Psoas muscle (tissue), 8 donors: ENCODE measurements at regions of chr7 and their contacts with region 1.

Region 1: GRCh38 chr7:50418086-50418515 is 32.0 kb downstream of the FIGNL1 start:
- DNase-seq: peak; percentile 50 to 68
- ATAC-seq: peak; percentile 66 to 86 (median 79)
- H3K4me3 ChIP-seq: no peak overlapping the region
- H3K27ac ChIP-seq: no peak overlapping the region
- H3K4me1 ChIP-seq: no peaks in the 10 kb centered on the region
- H3K27me3 ChIP-seq: no peaks in the 10 kb centered on the region
- CTCF ChIP-seq: peak; percentile 66

Region 2: DNA sequence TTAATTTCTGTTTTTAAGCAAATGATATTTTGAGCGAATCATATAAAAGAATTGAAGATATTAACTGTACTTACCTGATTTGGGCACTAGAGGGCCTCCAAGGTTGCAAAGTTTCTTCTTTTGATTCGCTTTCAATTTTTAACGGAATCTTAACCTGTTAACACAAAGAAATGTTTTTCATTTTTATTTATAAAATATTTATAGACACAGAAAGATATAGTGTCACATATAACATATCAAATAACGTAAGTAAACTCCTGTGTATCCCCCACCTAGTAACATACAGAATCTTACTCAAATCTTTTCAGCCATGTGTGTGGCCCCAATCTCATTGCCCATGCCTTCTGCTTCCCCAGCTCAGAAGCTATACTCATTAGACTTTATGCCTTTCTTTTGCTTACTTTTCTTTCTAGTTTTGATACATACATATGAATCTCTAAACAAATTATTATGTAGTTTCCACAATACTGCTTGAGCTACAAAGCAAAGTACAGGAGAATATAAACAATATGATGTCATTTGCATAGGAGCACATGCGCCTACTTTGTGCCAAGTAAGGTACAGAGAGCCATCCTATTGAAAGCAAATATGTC is 275.6 kb before region 1 on chr7:
- intact Hi-C with region 1: loop called in 1 of 2 experiments (anchors 5 kb)
- DNase-seq: no peak
- ATAC-seq: no peak
- H3K4me3 ChIP-seq: peak overlapping the region; percentile 19
- H3K27ac ChIP-seq: no peak overlapping the region
- H3K4me1 ChIP-seq: no peaks in the 10 kb centered on the region
- H3K27me3 ChIP-seq: no peaks in the 10 kb centered on the region
- CTCF ChIP-seq: peak; percentile 67